Dorsolateral prefrontal cortex (tissue), 120 donors: ENCODE measurements at regions of chr1 and their contacts with region 1.

Region 1: DNA sequence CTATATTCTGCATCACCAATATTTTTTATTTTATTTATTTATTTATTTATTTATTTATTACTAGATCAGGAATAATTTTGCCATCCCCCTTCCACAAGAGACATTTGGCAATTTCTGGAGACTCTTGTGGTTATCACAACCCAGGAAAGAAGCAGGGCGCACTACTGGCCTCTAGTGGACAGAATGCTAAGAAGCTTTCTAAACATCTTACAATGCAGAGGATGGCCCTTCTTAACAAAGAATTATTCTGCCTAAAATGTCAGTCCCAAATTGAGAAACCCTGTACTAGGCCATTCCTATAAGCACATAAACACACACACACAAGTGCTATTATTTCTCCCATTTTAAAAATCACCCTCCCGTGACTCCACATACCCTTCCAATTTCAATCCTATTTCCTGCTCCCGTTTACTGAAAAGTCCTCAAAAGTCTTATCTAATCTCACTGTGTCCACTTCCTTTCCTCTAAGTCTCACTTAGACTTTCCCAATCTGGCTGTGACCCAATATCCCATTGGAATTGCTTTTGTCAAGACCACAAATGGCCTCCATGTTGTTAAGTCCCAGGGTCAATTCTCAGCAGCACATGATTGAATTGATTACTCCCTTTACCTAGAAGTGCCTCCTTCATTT is 43.7 kb upstream of the RNF11 start:
- DNase-seq: peak; percentile 37 to 82 (median 56)
- H3K4me3 ChIP-seq: no peak overlapping the region
- H3K27ac ChIP-seq: no peak overlapping the region
- H3K27me3 ChIP-seq: no peaks in the 10 kb centered on the region
- CTCF ChIP-seq: peak; percentile 62 to 90 (median 82)

Region 2: GRCh38 chr1:50368179-50369012 is 823.9 kb before region 1 on chr1:
- intact Hi-C with region 1: loop called in 1 of 2 experiments (anchors 5 kb)
- DNase-seq: peak in 8 of 10 donors; percentile 11 to 64 (median 37)
- H3K4me3 ChIP-seq: peak overlapping the region in 54 of 59 donors; percentile 4 to 58 (median 41)
- H3K27ac ChIP-seq: no peak overlapping the region
- H3K27me3 ChIP-seq: peaks cover 0 to 8% (median 0%) of the 10 kb centered on the region in 45 donors
- CTCF ChIP-seq: peak; percentile 70 to 93 (median 84)

Region 3: DNA sequence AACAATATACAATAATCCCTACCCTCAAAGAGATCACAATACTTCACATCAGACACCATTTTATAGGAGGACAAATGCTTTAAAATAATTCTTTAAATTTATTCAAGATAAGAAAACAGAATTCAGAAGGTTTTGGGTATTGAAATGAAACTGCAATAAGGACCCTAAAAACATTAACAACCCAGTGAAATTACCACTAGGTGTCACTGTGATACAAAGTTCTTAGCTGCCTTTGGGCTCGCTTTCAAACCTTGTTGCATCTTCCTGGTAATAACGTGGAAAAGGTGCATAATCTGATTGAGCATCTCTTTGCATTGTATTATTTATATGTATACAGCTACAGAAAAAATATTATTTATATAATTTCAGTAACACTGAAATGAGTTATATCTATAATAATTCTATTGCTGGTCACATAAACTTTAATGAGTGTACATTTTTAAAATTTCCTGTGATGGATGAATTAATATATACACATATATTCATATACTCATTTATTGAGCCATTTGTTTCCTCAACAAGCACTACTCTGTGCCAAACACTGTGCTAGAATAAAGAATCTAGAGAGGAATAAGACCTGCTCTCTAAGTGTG is 417.5 kb before region 1 on chr1:
- intact Hi-C with region 1: loop called (anchors 5 to 10 kb)
- DNase-seq: peak in 1 of 10 donors; percentile 26
- H3K4me3 ChIP-seq: no peak overlapping the region
- H3K27ac ChIP-seq: no peak overlapping the region
- H3K27me3 ChIP-seq: no peaks in the 10 kb centered on the region
- CTCF ChIP-seq: peak; percentile 64 to 99 (median 84)

Region 4: DNA sequence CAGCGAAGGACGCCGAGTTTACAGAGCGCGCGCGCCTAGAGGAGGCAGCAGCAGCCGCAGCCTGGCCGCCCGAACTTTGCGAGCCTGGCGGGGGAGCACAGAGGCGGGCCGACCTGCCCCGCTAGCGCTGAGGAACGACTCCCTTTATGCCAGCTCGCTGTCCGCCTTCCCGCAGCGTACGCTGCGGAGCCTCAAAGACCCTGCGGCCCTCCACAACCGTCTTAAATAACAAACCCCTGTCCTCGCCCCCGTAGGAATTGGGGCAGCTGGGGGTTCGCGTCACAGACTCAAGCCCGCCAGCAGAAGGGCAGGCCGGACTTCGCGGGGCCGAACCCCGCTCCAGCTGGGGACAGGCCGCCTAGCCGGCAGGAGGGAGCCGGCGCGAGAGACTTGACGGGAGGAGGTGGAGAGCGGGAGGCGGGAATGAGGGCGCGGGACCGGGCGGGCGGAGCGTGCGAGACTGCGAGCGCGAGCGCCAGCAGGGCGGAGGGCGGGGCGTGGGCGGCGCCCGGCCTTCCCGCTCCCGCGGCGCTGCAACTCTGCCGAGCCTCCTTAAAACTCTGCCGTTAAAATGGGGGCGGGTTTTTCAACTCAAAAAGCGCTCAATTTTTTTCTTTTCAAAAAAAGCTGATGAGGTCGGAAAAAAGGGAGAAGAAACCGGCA is 224.0 kb before region 1 on chr1:
- intact Hi-C with region 1: loop called in 1 of 2 experiments (anchors 5 kb)
- DNase-seq: peak; percentile 76 to 91 (median 83)
- H3K4me3 ChIP-seq: peak overlapping the region; percentile 66 to 95 (median 81)
- H3K27ac ChIP-seq: peak overlapping the region; percentile 87 to 100 (median 98)
- H3K27me3 ChIP-seq: peaks cover 0 to 9% (median 0%) of the 10 kb centered on the region in 45 donors
- CTCF ChIP-seq: peak in 31 of 56 donors; percentile 3 to 54 (median 32)

Region 5: GRCh38 chr1:51000160-51000559 is 192.2 kb before region 1 on chr1:
- intact Hi-C with region 1: no loop called
- DNase-seq: no peak
- H3K4me3 ChIP-seq: no peak overlapping the region
- H3K27ac ChIP-seq: no peak overlapping the region
- H3K27me3 ChIP-seq: no peaks in the 10 kb centered on the region
- CTCF ChIP-seq: no peak

Region 6: DNA sequence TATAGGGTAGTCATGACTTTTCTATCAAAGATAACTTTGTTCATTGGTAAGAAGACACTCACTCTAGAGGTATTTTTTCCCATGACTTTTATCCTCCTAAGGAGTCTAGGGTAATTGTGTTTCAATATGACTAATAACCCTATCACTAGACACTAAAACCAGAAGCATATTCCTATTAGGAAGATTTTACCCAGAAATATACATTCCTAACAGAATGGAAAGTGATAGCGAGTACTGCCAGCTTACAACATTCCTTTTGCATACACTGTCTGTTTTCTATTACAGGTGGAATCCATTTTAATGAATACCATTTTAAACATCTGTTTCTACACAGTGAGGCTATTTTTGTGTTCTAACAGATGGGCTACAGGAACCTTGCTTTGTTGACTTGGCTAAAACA is 121.7 kb before region 1 on chr1:
- intact Hi-C with region 1: no loop called
- DNase-seq: no peak
- H3K4me3 ChIP-seq: no peak overlapping the region
- H3K27ac ChIP-seq: no peak overlapping the region
- H3K27me3 ChIP-seq: peaks cover 0 to 3% (median 0%) of the 10 kb centered on the region in 45 donors
- CTCF ChIP-seq: no peak

Region 7: DNA sequence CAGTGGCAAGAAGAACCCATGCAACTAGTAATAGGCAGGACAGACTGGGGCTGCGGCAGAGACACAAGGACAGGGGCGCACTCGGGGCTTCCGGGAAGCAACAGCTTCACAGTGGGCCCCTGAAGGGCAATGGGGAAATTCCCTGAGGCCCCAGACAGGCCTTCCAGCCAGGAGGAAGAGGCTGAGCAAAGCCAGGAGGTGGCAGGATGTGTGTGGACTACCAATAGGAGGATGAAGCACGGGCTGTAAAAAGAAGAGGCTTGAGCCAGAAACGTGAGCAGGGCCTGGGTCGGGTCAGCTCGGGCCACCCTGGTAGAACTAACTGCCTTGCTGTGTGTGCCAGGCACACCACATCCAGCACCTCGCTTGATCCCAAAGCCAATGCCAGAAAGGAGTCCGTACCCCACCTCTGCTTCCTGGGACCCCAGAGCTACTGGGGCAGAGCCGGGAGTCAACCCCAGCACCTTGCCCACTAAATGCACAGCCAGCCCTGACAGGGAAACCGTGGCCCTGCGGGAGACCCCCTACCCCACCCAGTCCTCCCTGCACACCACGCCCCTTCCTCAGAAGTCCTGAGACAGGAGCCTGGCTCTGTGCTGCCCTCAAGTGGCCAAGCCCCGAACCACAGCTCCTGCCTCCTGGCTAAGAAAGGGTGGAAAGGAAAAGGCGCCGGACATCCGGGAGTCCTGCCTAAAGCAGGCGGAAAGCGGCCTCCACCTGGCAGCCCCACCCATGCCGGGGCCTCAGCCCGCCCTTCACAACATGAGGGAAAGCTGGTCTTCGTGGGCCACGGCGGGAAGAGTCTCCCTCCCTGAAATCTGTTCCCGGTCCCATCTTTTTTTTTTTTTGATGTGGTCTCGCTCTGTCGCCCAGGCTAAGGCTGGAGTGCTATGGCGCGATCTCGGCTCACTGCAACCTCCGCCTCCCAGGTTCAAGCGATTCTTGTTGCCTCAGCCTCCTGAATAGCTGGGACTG is 104.3 kb after region 1 on chr1:
- intact Hi-C with region 1: loop called (anchors 5 to 10 kb)
- DNase-seq: peak; percentile 73 to 87 (median 82)
- H3K4me3 ChIP-seq: peak overlapping the region; percentile 45 to 79 (median 64)
- H3K27ac ChIP-seq: peak overlapping the region in 24 of 59 donors; percentile 2 to 84 (median 37)
- H3K27me3 ChIP-seq: no peaks in the 10 kb centered on the region
- CTCF ChIP-seq: peak; percentile 76 to 98 (median 94)

Region 8: GRCh38 chr1:51341876-51342496 is 149.7 kb after region 1 on chr1:
- intact Hi-C with region 1: no loop called
- DNase-seq: no peak
- H3K4me3 ChIP-seq: no peak overlapping the region
- H3K27ac ChIP-seq: no peak overlapping the region
- H3K27me3 ChIP-seq: peaks cover 0 to 47% (median 22%) of the 10 kb centered on the region in 45 donors
- CTCF ChIP-seq: no peak